ENCODE measurements at regions of chr20 and their contacts with region 1.

Region 1: DNA sequence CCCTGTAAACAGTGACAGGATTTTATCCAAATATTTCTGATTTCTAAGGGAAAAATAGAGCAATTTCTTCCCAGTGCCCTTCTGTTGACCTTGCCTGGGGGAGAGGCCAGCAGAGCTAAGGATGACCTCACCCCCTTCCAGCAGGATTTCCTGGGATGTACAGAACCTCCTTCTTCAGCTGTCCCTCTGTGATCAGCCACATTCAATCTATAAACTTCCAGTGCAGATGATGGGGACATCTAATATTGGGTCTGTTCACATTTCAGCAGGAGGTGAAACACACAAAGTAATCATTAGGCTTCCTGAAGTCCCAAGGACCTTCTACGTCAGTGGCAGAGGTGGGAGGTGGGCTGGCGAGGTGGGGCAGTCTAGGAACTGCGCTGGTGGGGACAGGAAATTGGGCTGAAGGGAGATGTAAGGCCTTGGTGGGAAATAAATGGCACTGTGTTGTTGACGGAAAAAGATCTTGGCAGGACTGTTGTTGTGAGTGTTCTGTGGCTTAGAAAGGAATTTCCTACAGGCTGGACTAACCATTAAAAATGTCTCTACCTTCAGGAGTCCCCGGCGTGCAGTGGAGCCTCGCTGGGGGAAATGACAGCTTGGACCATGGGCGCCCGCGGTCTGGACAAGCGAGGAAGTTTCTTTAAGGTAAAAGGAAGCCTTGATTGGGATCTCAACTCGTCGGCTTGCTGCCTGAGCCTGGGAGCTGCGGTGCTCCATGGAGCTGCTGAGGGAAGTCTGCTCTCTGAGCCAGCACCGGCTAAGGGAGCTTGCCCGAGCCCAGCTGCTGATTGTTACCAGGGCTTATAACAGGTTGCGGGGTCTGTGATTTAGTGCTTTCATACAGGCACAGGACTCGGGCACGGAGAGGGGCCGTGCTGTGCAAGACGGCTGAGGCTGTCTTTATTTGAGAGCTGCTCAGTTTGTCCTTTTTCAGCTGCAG is 127.9 kb upstream of the NAA20 start:
- DNase-seq: no peak
- H3K4me3 ChIP-seq: no peak overlapping the region
- H3K27ac ChIP-seq: no peak overlapping the region
- H3K4me1 ChIP-seq: peaks cover 25% of the 10 kb centered on the region
- H3K27me3 ChIP-seq: no peaks in the 10 kb centered on the region
- CTCF ChIP-seq: no peak

Region 2: GRCh38 chr20:19692685-19693119 is 196.6 kb before region 1 on chr20:
- CTCF ChIA-PET with region 1: no interaction called
- POLR2A ChIA-PET with region 1: no interaction called
- intact Hi-C with region 1: loop called (anchors 2 kb)
- DNase-seq: peak; percentile 70 to 72
- H3K4me3 ChIP-seq: peak overlapping the region; percentile 34; the same call in 1 of the 2 replicates
- H3K27ac ChIP-seq: peak overlapping the region; percentile 45
- H3K4me1 ChIP-seq: peaks cover 10% of the 10 kb centered on the region
- H3K27me3 ChIP-seq: no peaks in the 10 kb centered on the region
- CTCF ChIP-seq: peak; percentile 98

Region 3: GRCh38 chr20:19815553-19815991 is 73.7 kb before region 1 on chr20:
- CTCF ChIA-PET with region 1: no interaction called
- POLR2A ChIA-PET with region 1: no interaction called
- intact Hi-C with region 1: loop called (anchors 1 kb)
- DNase-seq: peak; percentile 68 to 96
- H3K4me3 ChIP-seq: no peak overlapping the region
- H3K27ac ChIP-seq: peak overlapping the region; percentile 95
- H3K4me1 ChIP-seq: peaks cover 32% of the 10 kb centered on the region
- H3K27me3 ChIP-seq: no peaks in the 10 kb centered on the region
- CTCF ChIP-seq: no peak

Region 4: GRCh38 chr20:19928328-19929011 is 39.2 kb after region 1 on chr20:
- CTCF ChIA-PET with region 1: no interaction called
- POLR2A ChIA-PET with region 1: no interaction called
- intact Hi-C with region 1: loop called (anchors 1 kb)
- DNase-seq: peak; percentile 52 to 72
- H3K4me3 ChIP-seq: no peak overlapping the region
- H3K27ac ChIP-seq: no peak overlapping the region
- H3K4me1 ChIP-seq: peaks cover 11% of the 10 kb centered on the region
- H3K27me3 ChIP-seq: no peaks in the 10 kb centered on the region
- CTCF ChIP-seq: no peak

Region 5: DNA sequence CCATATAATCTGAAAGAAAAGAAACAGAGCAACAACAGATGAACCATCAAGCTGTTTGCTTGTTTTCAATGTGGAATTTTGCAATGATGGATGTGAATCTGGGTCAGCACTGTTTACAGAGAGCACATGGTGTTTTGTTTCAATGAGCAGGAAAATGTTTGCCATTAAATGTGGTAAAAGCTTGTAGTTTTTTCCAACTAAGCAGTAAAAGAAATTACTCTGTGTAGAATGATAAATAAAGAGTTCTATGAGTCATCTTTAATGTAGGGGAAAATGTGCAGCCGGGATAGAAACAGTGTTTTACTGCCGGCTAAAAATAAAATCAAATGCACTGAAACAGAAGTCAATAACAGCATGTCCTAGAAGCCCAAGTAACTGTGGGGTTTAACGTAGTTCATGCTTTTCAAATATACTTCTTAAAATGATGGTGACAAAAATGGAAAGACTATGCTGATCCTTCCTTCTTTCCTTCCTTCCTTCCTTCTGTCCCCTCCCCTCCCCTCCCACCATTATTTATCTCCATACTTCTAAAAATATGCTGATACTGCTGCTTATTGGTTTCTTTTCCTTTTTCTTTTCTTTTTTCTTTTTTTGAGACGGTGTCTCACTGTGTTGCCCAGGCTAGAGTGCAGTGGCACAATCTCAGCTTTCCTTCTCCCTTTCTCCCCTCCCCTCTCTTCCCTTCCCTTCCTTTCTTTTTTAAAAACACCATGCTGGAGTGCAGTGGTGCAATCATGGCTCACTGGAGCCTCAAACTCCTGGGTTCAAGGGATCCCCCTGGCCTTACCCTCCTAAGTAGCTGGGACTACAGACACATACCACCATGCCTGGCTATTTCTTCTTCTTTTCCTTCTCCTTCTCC is 121.6 kb after region 1 on chr20:
- CTCF ChIA-PET with region 1: interaction called, 23 read pairs
- POLR2A ChIA-PET with region 1: no interaction called
- intact Hi-C with region 1: no loop called
- DNase-seq: peak in 1 of 2 experiments; percentile 69
- H3K4me3 ChIP-seq: no peak overlapping the region
- H3K27ac ChIP-seq: peak overlapping the region; percentile 3; the same call in 1 of the 2 replicates
- H3K4me1 ChIP-seq: peaks cover 8% of the 10 kb centered on the region; the same call in 1 of the 2 replicates
- H3K27me3 ChIP-seq: no peaks in the 10 kb centered on the region
- CTCF ChIP-seq: no peak

Region 6: DNA sequence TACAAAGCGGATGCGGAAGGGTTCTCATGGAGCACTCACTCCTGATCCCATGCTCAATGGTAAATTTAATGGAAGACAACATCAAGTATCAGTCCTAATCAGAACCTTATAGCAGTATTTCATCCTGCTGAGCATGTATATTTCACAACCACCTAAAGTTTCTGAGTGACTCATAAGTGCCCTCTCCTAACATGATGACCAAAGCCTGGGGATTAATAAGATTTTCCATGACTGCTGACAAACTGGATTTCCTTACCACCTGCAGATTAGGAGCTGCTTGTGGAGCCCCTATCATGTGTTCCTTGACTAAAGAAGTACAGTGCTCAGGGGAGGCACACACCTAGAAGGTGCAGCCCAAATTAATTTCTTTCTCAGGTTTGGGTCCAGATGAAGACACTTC is 591.4 kb after region 1 on chr20:
- CTCF ChIA-PET with region 1: no interaction called
- POLR2A ChIA-PET with region 1: no interaction called
- intact Hi-C with region 1: no loop called
- DNase-seq: peak in 1 of 2 experiments; percentile 69
- H3K4me3 ChIP-seq: no peak overlapping the region
- H3K27ac ChIP-seq: peak overlapping the region; percentile 43
- H3K4me1 ChIP-seq: peaks cover 11% of the 10 kb centered on the region; the same call in 1 of the 2 replicates
- H3K27me3 ChIP-seq: no peaks in the 10 kb centered on the region
- CTCF ChIP-seq: no peak

Region 7: DNA sequence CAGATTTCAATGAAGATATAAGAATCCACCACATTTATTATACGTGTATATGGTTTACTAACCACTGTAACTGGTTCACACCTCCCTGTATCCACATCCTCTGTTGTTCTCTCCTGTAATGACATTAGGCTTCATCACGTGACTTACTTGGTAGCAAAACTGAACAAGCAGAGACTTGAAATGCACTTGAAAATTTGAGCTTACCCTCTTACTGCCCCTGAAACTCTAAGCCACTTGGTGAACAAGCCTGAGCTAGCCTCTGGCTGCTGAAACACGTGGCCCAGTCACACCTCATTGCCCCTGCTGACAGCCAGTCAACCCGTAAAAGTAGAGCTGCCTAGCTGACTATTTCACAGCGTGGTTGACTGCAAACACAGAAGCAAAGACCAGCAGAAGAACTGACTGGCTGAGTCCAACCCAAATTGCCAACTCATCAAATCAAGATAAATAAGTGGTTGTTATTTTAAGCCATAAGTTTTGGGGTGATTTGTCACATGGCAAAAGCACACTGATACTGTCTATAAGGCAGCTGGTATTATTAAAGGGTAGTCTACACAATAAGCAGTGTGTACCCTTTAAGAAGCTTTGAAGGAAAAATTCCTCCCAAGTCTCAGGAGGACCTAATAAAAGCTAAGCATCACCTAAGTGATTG is 714.2 kb after region 1 on chr20:
- CTCF ChIA-PET with region 1: no interaction called
- POLR2A ChIA-PET with region 1: no interaction called
- intact Hi-C with region 1: no loop called
- DNase-seq: no peak
- H3K4me3 ChIP-seq: no peak overlapping the region
- H3K27ac ChIP-seq: no peak overlapping the region
- H3K4me1 ChIP-seq: no peaks in the 10 kb centered on the region
- H3K27me3 ChIP-seq: no peaks in the 10 kb centered on the region
- CTCF ChIP-seq: no peak

Region 8: DNA sequence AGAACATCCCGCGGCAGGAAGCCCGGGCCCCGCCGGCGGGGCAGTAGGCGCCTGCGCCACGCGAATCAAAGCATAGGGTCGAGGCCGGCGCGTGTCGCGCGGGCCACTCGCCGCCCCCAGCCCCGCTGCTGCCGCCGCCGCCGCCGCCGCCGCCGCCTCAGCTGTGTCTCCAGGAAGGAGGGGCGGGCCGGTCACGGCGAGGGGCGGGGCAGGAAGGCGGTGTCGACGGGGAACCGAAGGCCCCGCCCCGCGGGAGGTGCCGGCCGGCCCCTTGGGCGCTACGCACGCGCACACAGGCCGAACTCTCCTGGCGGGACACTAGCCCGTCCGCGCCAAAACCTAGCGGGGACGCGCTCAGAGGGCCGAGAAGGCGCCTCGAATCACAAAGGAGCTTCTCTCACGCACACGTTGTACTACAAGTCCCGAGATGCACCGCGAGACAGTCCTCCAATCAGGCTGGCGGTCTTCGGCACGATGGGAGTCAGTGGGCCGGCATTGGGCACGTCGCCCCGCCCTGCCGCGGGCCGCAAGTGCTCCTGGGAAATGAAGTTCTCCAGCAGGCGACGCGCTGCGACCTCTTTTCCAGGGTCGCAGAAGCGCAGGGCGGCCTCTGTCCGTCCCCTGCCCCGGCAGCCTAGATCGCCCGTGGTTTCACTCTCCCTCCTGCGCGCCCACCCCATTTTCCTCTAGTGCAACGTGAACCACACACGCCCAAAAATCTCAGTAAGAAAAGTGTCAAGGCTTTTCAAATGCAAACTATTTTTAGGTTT is 823.4 kb after region 1 on chr20 and contains the start of gene RALGAPA2:
- CTCF ChIA-PET with region 1: no interaction called
- POLR2A ChIA-PET with region 1: no interaction called
- intact Hi-C with region 1: no loop called
- DNase-seq: peak; percentile 95 to 96
- H3K4me3 ChIP-seq: peak within 1 kb of the TSS; percentile 92
- H3K27ac ChIP-seq: peak within 1 kb of the TSS; percentile 50; the same call in 1 of the 2 replicates
- H3K4me1 ChIP-seq: peaks cover 26% of the 10 kb centered on the region
- H3K27me3 ChIP-seq: no peaks in the 10 kb centered on the region
- CTCF ChIP-seq: no peak
- total RNA-seq, gene RALGAPA2: 19.2 and 28.7 TPM in 2 replicates

Measured in PC-9 (cell line).